CD8-positive, alpha-beta T cell (primary cell): ENCODE measurements at regions of chr16 and their contacts with region 1.

Region 1: GRCh38 chr16:30445408-30446202 is at the start of gene SEPHS2:
- DNase-seq: peak; percentile 93 to 98 (median 94)
- ATAC-seq: peak; percentile 95
- H3K4me3 ChIP-seq: peak within 1 kb of the TSS; percentile 69 to 73
- H3K4me3 Mint-ChIP-seq: peak within 1 kb of the TSS; percentile 92
- H3K27ac ChIP-seq: peak within 1 kb of the TSS; percentile 76 to 80
- H3K27ac Mint-ChIP-seq: peak within 1 kb of the TSS; percentile 95
- H3K4me1 ChIP-seq: peaks cover 32% of the 10 kb centered on the region
- H3K4me1 Mint-ChIP-seq: peaks cover 42% of the 10 kb centered on the region
- H3K27me3 ChIP-seq: no peaks in the 10 kb centered on the region
- H3K27me3 Mint-ChIP-seq: no peaks in the 10 kb centered on the region
- CTCF ChIP-seq: peak; percentile 31
- total RNA-seq, gene SEPHS2: 22.6 to 24.1 TPM

Region 2: DNA sequence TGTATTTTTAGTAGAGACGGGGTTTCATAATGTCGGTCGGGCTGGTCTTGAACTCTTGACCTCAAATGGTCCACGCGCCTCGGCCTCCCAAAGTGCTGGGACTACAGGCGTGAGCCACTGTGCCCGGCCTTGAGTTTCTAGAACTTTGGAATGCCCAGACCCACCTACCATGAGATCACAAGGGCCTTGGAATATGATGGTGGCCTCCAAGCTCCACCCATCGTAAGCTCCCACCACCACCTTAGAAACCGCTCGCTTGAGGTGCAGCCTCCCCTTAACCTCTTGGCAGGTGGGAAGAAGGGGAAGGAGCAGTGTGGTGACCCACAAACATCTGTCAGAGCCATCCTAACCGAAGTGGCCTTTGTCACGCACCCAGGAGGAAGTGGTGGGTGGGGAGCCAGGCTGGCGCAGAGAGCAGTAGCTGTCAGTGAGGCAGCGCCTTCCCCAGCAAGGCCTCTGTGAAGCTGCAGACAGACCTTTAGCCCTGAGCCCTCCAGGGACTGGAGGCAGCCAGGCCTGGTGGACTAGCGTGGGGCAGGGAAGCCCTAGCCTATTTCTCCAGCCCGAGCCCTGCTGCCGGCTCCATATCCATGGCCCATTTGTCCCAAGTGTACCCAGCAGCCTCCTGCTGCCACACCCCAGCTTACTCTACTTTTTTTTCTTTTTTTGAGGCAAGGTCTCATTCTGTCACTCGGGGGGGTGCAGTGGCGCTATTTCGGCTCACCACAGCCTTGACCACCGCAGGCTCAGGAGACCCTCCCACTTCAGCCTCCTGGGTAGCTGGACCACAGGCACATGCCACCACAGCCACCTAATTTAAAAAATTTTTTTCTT is 13.2 kb after region 1 on chr16:
- CTCF ChIA-PET with region 1: interaction called, 25 read pairs
- POLR2A ChIA-PET with region 1: interaction called, 6 read pairs
- intact Hi-C with region 1: no loop called
- DNase-seq: peak; percentile 40 to 93 (median 76)
- ATAC-seq: peak; percentile 93
- H3K4me3 ChIP-seq: peak overlapping the region; percentile 5 to 22
- H3K4me3 Mint-ChIP-seq: peak overlapping the region; percentile 66
- H3K27ac ChIP-seq: peak overlapping the region; percentile 15 to 69
- H3K27ac Mint-ChIP-seq: peak overlapping the region; percentile 89
- H3K4me1 ChIP-seq: peaks cover 26% of the 10 kb centered on the region
- H3K4me1 Mint-ChIP-seq: peaks cover 48% of the 10 kb centered on the region
- H3K27me3 ChIP-seq: no peaks in the 10 kb centered on the region
- H3K27me3 Mint-ChIP-seq: no peaks in the 10 kb centered on the region
- CTCF ChIP-seq: no peak

Region 3: GRCh38 chr16:30478766-30479478 is 33.3 kb after region 1 on chr16:
- CTCF ChIA-PET with region 1: interaction called, 45 read pairs
- POLR2A ChIA-PET with region 1: interaction called, 26 read pairs
- intact Hi-C with region 1: no loop called
- DNase-seq: no peak
- ATAC-seq: no peak
- H3K4me3 ChIP-seq: no peak overlapping the region
- H3K4me3 Mint-ChIP-seq: peak overlapping the region; percentile 50
- H3K27ac ChIP-seq: peak overlapping the region in 1 of 2 experiments; percentile 31
- H3K27ac Mint-ChIP-seq: peak overlapping the region; percentile 90
- H3K4me1 ChIP-seq: peaks cover 47% of the 10 kb centered on the region
- H3K4me1 Mint-ChIP-seq: peaks cover 60% of the 10 kb centered on the region
- H3K27me3 ChIP-seq: no peaks in the 10 kb centered on the region
- H3K27me3 Mint-ChIP-seq: no peaks in the 10 kb centered on the region
- CTCF ChIP-seq: no peak

Region 4: DNA sequence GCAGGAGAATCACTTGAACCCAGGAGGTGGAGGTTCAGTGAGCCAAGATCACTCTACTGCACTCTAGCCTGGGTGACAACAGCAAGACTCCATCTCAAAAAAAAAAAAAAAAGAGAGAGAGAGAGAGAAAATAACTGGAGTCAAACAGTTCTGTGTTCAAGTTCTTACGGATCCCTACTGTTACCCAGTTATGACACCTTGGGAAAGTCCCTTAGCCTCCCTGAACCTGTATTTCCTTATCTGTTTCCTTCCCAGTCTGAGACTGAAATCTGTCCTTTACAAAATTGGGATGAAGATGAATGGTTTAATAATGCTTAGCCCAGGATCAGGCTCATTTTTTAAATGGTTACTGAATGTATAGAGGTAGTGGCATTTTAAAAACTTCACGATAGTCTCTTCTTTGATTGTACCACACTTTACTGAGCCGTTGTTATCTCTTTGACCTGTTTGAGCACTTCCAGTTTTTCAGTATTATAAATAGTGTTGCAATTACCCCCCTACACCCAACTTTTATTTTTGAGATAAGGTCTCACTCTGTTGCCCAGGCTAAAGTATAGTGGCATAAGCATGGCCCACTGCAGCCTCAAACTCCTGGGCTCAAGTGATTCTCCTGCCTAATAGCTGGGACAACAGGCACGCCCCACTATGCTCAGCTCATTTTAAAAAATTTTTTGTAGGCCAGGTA is 63.6 kb after region 1 on chr16:
- CTCF ChIA-PET with region 1: interaction called, 9 read pairs
- POLR2A ChIA-PET with region 1: no interaction called
- intact Hi-C with region 1: loop called in 1 of 2 experiments (anchors 5 kb)
- DNase-seq: no peak
- ATAC-seq: no peak
- H3K4me3 ChIP-seq: no peak overlapping the region
- H3K4me3 Mint-ChIP-seq: no peak overlapping the region
- H3K27ac ChIP-seq: peak overlapping the region in 1 of 2 experiments; percentile 22
- H3K27ac Mint-ChIP-seq: peak overlapping the region; percentile 74
- H3K4me1 ChIP-seq: no peaks in the 10 kb centered on the region
- H3K4me1 Mint-ChIP-seq: peaks cover 9% of the 10 kb centered on the region
- H3K27me3 ChIP-seq: no peaks in the 10 kb centered on the region
- H3K27me3 Mint-ChIP-seq: no peaks in the 10 kb centered on the region
- CTCF ChIP-seq: no peak

Region 5: DNA sequence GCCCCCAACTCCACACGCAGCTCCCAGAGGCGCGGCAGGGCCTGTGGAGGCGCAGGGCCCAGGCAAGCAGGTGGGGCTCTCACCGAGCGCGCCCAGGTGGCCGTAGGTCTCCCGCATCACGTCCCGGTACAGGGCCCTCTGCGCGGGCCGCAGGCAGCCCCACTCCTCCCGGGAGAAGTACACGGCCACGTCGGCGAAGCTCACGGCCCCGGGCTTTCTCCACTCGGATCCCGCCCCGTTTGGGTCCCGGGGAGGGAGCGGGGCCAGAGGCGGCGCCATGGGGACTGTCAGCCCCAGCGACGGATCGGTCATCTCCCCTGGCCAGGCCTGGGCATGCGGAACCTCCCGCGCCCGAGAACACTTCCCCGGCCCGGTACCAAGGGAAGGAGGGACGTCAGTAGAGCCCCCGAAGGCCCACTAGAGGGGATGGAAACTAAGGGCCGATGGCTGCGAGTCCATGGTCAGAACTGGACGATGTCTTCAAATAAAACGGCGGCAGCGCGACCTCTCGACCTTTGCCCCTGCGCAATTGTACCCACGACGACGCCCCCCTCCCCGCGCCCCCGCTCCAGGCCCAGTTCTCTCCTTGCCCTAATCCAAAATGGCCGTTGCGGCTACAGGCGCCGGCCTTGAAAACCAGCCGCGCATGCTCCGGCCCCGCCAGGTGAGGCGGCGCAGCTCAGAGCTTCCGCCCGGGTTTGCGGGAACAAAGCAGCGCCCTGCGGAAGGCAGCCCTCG is 88.9 kb after region 1 on chr16 and contains the start of gene ZNF747:
- CTCF ChIA-PET with region 1: interaction called, 30 read pairs
- POLR2A ChIA-PET with region 1: no interaction called
- intact Hi-C with region 1: loop called in 1 of 2 experiments (anchors 1 kb)
- DNase-seq: peak; percentile 77 to 95 (median 92)
- ATAC-seq: peak; percentile 80
- H3K4me3 ChIP-seq: peak within 1 kb of the TSS; percentile 82 to 96
- H3K4me3 Mint-ChIP-seq: peak within 1 kb of the TSS; percentile 89
- H3K27ac ChIP-seq: peak within 1 kb of the TSS; percentile 77 to 97
- H3K27ac Mint-ChIP-seq: peak within 1 kb of the TSS; percentile 96
- H3K4me1 ChIP-seq: peaks cover 13% of the 10 kb centered on the region
- H3K4me1 Mint-ChIP-seq: peaks cover 38% of the 10 kb centered on the region
- H3K27me3 ChIP-seq: no peaks in the 10 kb centered on the region
- H3K27me3 Mint-ChIP-seq: no peaks in the 10 kb centered on the region
- CTCF ChIP-seq: no peak
- total RNA-seq, gene ZNF747: 6.2 to 6.3 TPM

Region 6: GRCh38 chr16:30602616-30603277 is 157.1 kb after region 1 on chr16:
- CTCF ChIA-PET with region 1: interaction called, 11 read pairs
- POLR2A ChIA-PET with region 1: no interaction called
- intact Hi-C with region 1: loop called (anchors 1 to 2 kb)
- DNase-seq: no peak
- ATAC-seq: no peak
- H3K4me3 ChIP-seq: no peak overlapping the region
- H3K4me3 Mint-ChIP-seq: no peak overlapping the region
- H3K27ac ChIP-seq: no peak overlapping the region
- H3K27ac Mint-ChIP-seq: peak overlapping the region; percentile 52
- H3K4me1 ChIP-seq: no peaks in the 10 kb centered on the region
- H3K4me1 Mint-ChIP-seq: peaks cover 4% of the 10 kb centered on the region
- H3K27me3 ChIP-seq: no peaks in the 10 kb centered on the region
- H3K27me3 Mint-ChIP-seq: no peaks in the 10 kb centered on the region
- CTCF ChIP-seq: no peak

Region 7: DNA sequence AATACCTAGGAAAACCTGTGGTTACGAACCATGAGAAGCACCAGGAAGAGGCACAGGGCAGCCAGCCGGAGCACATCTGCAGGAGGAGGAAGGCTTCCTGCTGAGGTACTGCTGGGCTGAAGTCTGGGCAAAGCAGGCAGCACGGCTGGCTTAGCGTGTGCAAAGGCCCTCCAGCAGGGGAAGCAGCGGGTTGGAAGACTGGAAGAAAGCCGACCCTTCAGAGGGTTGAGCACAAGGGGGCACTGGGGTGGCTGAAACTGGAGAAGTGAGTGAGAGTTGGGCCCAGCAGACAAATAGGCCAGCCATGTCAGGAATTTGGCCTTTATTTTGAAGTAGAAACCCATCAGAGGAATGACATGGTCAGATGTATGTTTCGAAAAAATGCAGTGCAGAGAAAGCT is 527.3 kb after region 1 on chr16:
- CTCF ChIA-PET with region 1: no interaction called
- POLR2A ChIA-PET with region 1: no interaction called
- intact Hi-C with region 1: no loop called
- DNase-seq: no peak
- ATAC-seq: no peak
- H3K4me3 ChIP-seq: no peak overlapping the region
- H3K4me3 Mint-ChIP-seq: no peak overlapping the region
- H3K27ac ChIP-seq: no peak overlapping the region
- H3K27ac Mint-ChIP-seq: no peak overlapping the region
- H3K4me1 ChIP-seq: no peaks in the 10 kb centered on the region
- H3K4me1 Mint-ChIP-seq: peaks cover 2% of the 10 kb centered on the region
- H3K27me3 ChIP-seq: no peaks in the 10 kb centered on the region
- H3K27me3 Mint-ChIP-seq: no peaks in the 10 kb centered on the region
- CTCF ChIP-seq: no peak